ENCODE measurements at regions of chr4 and their contacts with region 1.

Region 1: DNA sequence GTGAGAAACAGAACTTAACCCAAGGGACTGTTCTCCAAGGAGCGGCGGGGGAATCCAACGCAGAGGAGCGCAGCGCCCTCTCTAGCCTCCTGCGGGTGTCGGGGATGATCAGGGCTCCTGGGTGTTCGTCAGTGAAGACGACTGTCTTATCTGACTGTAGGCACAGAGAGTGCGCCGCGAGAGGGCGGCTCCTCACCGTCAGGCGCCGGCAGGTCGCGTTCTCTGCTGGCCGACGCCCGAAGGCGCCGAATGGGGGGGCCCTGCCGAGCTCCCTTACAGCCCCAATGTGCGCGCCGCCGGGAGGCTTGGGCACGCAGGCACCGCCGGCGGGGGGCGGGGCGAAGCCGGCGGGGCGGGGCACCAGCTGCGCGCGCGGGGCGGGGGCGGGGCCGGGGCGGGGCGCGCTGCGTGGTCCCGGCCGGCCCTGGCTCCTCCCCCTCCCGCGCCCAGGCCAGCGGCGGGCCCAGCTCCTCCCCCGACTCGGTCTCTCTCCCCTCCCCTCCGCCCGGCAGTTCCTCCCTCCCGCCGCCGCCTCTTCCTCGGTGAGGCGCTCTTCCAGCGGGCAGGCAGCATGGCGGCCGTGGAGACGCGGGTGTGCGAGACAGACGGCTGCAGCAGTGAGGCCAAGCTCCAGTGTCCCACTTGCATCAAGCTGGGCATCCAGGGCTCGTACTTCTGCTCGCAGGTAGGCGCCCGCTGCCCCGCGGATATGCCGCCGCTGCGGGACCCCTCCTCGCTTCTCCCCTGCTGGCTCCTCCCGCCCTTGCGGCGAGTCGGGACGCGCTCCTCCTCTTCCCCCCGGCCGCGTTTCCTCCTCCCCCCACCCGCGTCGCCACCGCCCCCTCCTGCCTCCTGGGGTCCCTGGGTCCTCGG is at the start of gene METAP1:
- DNase-seq: peak; percentile 91
- H3K4me3 ChIP-seq: peak within 1 kb of the TSS; percentile 64 to 93 (median 73)
- H3K27ac ChIP-seq: peak within 1 kb of the TSS; percentile 44
- H3K4me1 ChIP-seq: peaks cover 6% of the 10 kb centered on the region
- H3K27me3 ChIP-seq: no peaks in the 10 kb centered on the region
- CTCF ChIP-seq: peak; percentile 39 to 68
- POLR2A ChIP-seq: peak; percentile 81
- total RNA-seq, gene METAP1: 38.8 and 39.8 TPM in 2 replicates

Region 2: GRCh38 chr4:98260579-98261290 is 734.7 kb before region 1 on chr4:
- CTCF ChIA-PET with region 1: interaction called, 11 read pairs
- POLR2A ChIA-PET with region 1: interaction called, 3 read pairs
- dilution Hi-C with region 1: no loop called
- intact Hi-C with region 1: loop called (anchors 2 kb)
- DNase-seq: peak; percentile 98
- H3K4me3 ChIP-seq: peak overlapping the region; percentile 73 to 76 (median 73)
- H3K27ac ChIP-seq: peak overlapping the region; percentile 86
- H3K4me1 ChIP-seq: peaks cover 22% of the 10 kb centered on the region
- H3K27me3 ChIP-seq: no peaks in the 10 kb centered on the region
- CTCF ChIP-seq: no peak
- POLR2A ChIP-seq: peak; percentile 94

Region 3: DNA sequence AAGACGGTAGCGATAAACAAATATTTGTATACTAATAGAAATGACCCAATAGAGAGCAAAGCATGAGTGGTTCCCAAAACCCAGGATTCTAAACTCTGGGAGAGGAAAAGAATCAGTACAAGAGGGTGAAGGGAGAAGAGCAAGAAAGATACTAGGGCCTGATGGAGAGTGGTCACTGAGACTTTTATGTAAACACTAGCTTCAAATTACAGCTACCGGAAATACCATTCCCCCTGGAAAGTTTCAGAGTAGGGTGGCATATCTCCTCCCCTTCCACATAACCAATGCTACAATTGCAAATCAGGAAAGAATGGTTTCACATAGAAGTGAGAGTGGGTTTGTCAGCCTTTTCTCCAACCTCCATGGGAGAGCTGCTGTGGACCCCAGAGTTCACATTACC is 143.6 kb before region 1 on chr4:
- CTCF ChIA-PET with region 1: no interaction called
- POLR2A ChIA-PET with region 1: no interaction called
- dilution Hi-C with region 1: no loop called
- intact Hi-C with region 1: no loop called
- DNase-seq: no peak
- H3K4me3 ChIP-seq: no peak overlapping the region
- H3K27ac ChIP-seq: no peak overlapping the region
- H3K4me1 ChIP-seq: no peaks in the 10 kb centered on the region
- H3K27me3 ChIP-seq: no peaks in the 10 kb centered on the region
- CTCF ChIP-seq: no peak
- POLR2A ChIP-seq: no peak

Region 4: GRCh38 chr4:98928505-98929340 is 66.7 kb before region 1 on chr4 and contains the start of gene EIF4E:
- CTCF ChIA-PET with region 1: interaction called, 23 read pairs
- POLR2A ChIA-PET with region 1: no interaction called
- dilution Hi-C with region 1: no loop called
- intact Hi-C with region 1: loop called (anchors 2 kb)
- DNase-seq: peak; percentile 99
- H3K4me3 ChIP-seq: peak within 1 kb of the TSS; percentile 91 to 95 (median 91)
- H3K27ac ChIP-seq: peak within 1 kb of the TSS; percentile 93
- H3K4me1 ChIP-seq: peaks cover 32% of the 10 kb centered on the region
- H3K27me3 ChIP-seq: no peaks in the 10 kb centered on the region
- CTCF ChIP-seq: peak in 1 of 2 donors; percentile 26
- POLR2A ChIP-seq: peak; percentile 81
- total RNA-seq, gene EIF4E: 103 and 107 TPM in 2 replicates

Region 5: DNA sequence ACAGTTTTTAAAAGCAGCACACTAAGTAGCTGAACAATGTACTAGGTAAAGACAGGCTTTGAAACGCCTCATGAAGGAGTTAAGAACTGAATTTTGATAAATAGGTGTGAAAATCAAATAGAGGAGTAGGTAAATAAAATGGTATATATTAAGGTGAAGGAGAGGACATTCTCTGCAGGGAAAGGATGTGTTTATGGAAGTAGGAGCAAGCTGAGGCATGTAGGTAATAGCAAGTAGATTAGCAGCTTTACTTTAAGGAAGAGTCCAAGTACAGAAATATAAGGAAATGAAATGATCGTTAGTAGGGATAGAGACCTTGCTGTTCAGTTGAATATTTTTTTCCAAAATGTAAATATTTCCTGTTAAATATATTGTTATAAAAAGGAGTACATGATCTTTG is 12.6 kb after region 1 on chr4:
- CTCF ChIA-PET with region 1: interaction called, 13 read pairs
- POLR2A ChIA-PET with region 1: interaction called, 3 read pairs
- dilution Hi-C with region 1: no loop called
- intact Hi-C with region 1: no loop called
- DNase-seq: no peak
- H3K4me3 ChIP-seq: no peak overlapping the region
- H3K27ac ChIP-seq: no peak overlapping the region
- H3K4me1 ChIP-seq: no peaks in the 10 kb centered on the region
- H3K27me3 ChIP-seq: no peaks in the 10 kb centered on the region
- CTCF ChIP-seq: no peak
- POLR2A ChIP-seq: no peak

Region 6: GRCh38 chr4:99062120-99062519 is 66.7 kb after region 1 on chr4:
- CTCF ChIA-PET with region 1: interaction called, 71 read pairs
- POLR2A ChIA-PET with region 1: no interaction called
- dilution Hi-C with region 1: no loop called
- intact Hi-C with region 1: loop called (anchors 1 kb)
- DNase-seq: no peak
- H3K4me3 ChIP-seq: no peak overlapping the region
- H3K27ac ChIP-seq: no peak overlapping the region
- H3K4me1 ChIP-seq: peaks cover 18% of the 10 kb centered on the region
- H3K27me3 ChIP-seq: no peaks in the 10 kb centered on the region
- CTCF ChIP-seq: no peak
- POLR2A ChIP-seq: no peak

Region 7: DNA sequence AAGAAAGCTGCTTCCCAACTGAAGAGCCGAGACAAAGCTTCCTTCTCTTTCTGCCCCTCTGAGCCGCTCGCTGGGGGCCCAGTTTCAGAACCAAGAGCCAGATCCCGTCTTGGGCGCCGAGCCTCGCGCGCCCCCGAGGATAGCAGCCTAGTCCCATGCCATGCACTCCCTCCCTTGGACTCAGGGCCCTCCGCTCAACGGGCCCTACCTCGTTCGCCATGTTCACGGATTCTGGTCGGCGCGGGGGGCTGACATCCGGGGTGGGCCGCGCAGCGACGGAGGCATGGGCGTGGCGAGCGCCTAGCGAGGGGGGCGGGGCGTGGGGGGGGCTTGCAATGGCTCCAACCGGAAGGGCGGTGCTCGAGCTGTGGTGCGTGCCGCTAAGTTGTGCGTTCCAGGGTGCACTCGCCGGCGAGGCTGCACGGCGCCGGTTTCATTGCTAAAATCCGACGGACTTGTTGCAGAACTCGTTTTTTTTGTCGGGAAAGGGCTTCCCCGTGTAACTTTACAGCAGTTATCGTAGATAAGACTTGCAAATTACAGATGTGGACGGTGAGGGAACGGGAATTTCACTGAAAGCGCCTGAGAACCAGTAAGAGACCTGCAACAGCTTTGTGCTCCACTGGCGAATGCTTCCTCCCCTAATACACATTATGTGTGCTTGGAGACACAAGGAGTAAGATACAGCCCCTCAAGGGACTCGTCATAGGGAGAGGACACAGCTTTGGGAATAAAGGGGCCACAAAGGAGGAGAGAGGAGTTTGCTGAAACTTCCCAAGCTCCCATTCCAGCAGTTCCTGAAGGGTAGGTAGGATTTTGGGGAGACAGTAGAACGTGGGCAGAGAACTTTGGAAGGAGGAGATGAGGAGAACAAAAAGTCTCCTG is 93.3 kb after region 1 on chr4 and contains the start of gene ADH5:
- CTCF ChIA-PET with region 1: interaction called, 5 read pairs
- POLR2A ChIA-PET with region 1: interaction called, 3 read pairs
- dilution Hi-C with region 1: no loop called
- intact Hi-C with region 1: loop called (anchors 2 kb)
- DNase-seq: peak; percentile 72
- H3K4me3 ChIP-seq: peak within 1 kb of the TSS; percentile 80 to 98 (median 82)
- H3K27ac ChIP-seq: peak within 1 kb of the TSS; percentile 66
- H3K4me1 ChIP-seq: peaks cover 8% of the 10 kb centered on the region
- H3K27me3 ChIP-seq: no peaks in the 10 kb centered on the region
- CTCF ChIP-seq: no peak
- POLR2A ChIP-seq: peak; percentile 91
- total RNA-seq, gene ADH5: 101 and 103 TPM in 2 replicates

Region 8: GRCh38 chr4:99159699-99160098 is 164.3 kb after region 1 on chr4:
- CTCF ChIA-PET with region 1: no interaction called
- POLR2A ChIA-PET with region 1: no interaction called
- dilution Hi-C with region 1: no loop called
- intact Hi-C with region 1: no loop called
- DNase-seq: no peak
- H3K4me3 ChIP-seq: no peak overlapping the region
- H3K27ac ChIP-seq: no peak overlapping the region
- H3K4me1 ChIP-seq: no peaks in the 10 kb centered on the region
- H3K27me3 ChIP-seq: no peaks in the 10 kb centered on the region
- CTCF ChIP-seq: no peak
- POLR2A ChIP-seq: no peak

Measured in endothelial cell of umbilical vein (primary cell).